A549 (cell line): ENCODE measurements at regions of chr3 and their contacts with region 1.

Region 1: DNA sequence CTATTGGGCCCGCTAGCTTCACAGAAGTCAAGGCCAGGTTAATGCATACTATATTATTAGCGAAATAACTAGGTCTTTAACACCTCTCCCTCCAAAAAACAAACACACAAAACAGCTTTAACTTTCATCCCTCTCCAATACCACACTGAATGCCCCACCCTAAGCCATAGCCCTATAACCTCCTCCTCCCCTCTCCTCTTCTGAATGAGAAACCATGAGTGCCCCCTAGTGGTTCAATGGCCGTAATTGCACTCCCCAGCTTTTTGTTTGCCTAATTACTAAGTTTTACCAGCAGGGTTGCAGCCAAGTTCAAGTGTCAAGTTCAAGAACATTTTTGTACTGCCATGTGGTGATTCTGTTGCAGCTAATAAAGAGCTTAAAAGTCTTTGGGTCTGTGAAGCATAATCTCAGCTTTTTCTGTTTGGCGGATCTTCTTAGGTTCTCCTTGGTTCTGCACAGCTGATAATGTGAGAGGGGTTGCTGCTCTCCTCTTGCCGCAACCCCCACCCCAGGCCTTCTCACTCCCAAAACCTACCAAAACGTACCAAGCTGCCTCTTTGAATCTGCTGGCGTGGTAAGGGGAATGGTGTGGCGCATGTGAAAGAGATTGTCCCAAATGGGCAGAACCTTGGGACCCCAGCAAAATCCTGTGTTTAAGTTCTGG is 57.9 kb downstream of the RPL22L1 start:
- DNase-seq: peak; percentile 67 to 70
- ATAC-seq: peak; percentile 75 to 86
- H3K4me3 ChIP-seq: no peak overlapping the region
- H3K27ac ChIP-seq: no peak overlapping the region
- H3K4me1 ChIP-seq: peaks cover 6% of the 10 kb centered on the region
- CTCF ChIP-seq: peak; percentile 79
- EP300 ChIP-seq: no peak
- POLR2A ChIP-seq: no peak
- RAD21 ChIP-seq: peak; percentile 88 to 90

Region 2: GRCh38 chr3:170414202-170414663 is 397.8 kb before region 1 on chr3:
- CTCF ChIA-PET with region 1: interaction called, 277 read pairs
- POLR2A ChIA-PET with region 1: interaction called, 3 read pairs
- DNase-seq: peak; percentile 49 to 63
- ATAC-seq: peak; percentile 62 to 84; a peak in 5 of 6 replicates
- H3K4me3 ChIP-seq: no peak overlapping the region
- H3K27ac ChIP-seq: no peak overlapping the region
- H3K4me1 ChIP-seq: no peaks in the 10 kb centered on the region
- CTCF ChIP-seq: peak; percentile 96
- EP300 ChIP-seq: no peak
- POLR2A ChIP-seq: no peak
- RAD21 ChIP-seq: peak; percentile 97 to 98

Region 3: GRCh38 chr3:170499565-170500156 is 312.4 kb before region 1 on chr3:
- CTCF ChIA-PET with region 1: interaction called, 16 read pairs
- POLR2A ChIA-PET with region 1: no interaction called
- DNase-seq: peak; percentile 48 to 61
- ATAC-seq: peak; percentile 88 to 95
- H3K4me3 ChIP-seq: no peak overlapping the region
- H3K27ac ChIP-seq: no peak overlapping the region
- H3K4me1 ChIP-seq: no peaks in the 10 kb centered on the region
- CTCF ChIP-seq: peak; percentile 45
- EP300 ChIP-seq: no peak
- POLR2A ChIP-seq: no peak
- RAD21 ChIP-seq: peak; percentile 63 to 70

Region 4: DNA sequence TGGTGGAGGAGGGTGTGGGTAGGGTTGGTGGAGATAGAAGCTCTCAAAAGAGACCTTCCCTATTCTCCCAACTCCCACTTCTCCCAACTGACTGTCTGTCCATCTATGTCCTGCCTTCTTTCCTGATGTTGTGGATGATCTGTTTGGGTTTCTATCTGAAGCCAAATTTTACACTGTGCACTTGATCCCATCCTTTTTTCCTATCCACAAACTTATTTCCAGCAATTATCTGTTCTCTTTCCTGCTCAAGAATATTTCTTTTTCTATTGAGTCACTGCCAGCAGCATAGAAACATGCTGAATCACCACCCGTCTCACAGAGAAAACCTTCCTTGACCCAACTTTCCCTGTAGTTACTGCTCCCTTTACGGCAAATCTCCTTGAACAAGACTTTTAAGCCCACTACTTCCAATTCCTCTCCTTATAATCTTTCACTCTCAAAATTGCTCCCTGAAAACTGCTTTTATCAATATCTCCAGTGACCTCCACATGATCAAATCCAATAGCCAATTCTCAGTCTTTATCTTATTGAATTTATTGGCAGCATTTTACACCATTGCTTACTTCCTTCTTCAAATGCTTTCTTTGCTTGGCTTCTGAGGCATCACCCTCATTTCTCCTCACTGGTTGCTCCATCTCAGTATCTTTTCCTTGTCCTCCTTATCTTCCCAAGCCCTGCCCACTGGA is 84.9 kb before region 1 on chr3:
- CTCF ChIA-PET with region 1: interaction called, 27 read pairs
- POLR2A ChIA-PET with region 1: no interaction called
- DNase-seq: peak; percentile 13 to 42
- ATAC-seq: peak; percentile 78 to 80
- H3K4me3 ChIP-seq: no peak overlapping the region
- H3K27ac ChIP-seq: peak overlapping the region; percentile 69 to 94
- H3K4me1 ChIP-seq: peaks cover 20% of the 10 kb centered on the region
- CTCF ChIP-seq: no peak
- EP300 ChIP-seq: no peak
- POLR2A ChIP-seq: no peak
- RAD21 ChIP-seq: no peak

Region 5: DNA sequence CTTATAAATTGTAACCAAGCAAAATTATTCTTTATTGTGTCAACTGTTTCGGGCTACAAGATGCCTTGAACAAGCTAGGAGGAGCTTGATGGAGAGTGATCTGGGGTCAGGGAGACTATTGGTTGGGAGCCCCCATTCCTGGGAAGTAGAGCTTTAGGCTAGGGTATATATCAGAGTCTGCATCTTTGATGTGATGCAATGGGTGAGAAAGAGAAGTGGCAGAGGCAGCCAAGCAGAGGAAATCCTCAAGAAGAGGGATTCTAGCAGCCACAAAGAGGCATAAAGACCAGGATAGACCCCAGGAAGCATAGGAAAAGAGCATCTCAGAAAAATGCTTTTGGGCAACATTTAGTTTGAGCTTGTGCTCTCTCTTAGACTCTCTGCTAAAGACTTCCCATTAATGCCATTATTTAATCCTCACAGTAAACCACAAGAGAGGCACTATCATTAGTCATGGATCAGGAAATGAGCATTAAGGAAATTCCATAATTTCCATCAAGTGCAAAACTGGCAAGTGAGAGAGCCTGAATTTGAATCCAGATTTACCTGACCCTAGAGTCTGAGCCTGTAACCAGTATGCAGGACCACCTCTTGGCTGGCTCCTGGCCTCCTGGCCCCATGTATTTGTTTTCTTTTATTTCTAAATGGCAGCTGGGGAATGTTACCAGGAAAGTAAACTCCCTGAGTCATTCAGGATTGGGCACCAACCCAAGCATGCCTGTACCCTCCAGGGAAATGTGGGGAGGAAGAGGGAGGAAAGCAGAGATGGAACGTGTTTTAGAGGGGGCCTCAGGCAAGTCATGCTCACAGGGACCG is 60.8 kb before region 1 on chr3:
- CTCF ChIA-PET with region 1: interaction called, 10 read pairs
- POLR2A ChIA-PET with region 1: no interaction called
- DNase-seq: peak; percentile 9 to 45
- ATAC-seq: peak; percentile 81 to 92
- H3K4me3 ChIP-seq: no peak overlapping the region
- H3K27ac ChIP-seq: peak overlapping the region; percentile 65 to 78
- H3K4me1 ChIP-seq: peaks cover 32% of the 10 kb centered on the region
- CTCF ChIP-seq: no peak
- EP300 ChIP-seq: no peak
- POLR2A ChIP-seq: no peak
- RAD21 ChIP-seq: no peak

Region 6: DNA sequence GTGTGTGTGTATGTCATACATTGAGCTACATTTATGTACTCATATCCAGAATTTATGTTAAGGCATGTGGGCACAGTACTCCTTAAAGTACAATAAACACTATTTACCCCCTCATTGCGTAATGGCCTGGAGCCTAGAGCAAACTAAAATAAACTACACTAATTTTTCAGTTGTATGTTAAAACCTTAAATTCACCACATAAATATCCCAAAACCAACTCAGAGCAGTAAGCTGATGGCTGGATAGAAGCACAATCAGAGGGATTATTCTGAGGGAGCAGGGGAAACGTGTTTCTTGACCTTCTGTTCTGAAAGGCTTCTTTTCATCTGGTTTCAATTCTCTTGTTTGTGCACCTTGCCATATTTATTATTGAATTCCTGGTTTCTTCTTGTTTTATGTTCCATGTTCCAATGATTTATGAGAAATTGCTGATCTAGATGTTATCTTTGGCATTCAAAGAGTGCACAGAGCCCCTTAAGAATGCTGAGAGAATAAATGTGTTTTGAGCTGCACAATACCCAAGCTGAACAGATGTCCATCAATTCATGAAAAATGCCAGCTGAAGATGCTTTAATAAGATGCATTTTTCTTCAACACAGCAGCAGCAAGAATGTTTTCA is 28.3 kb after region 1 on chr3:
- CTCF ChIA-PET with region 1: interaction called, 11 read pairs
- POLR2A ChIA-PET with region 1: no interaction called
- DNase-seq: no peak
- ATAC-seq: no peak
- H3K4me3 ChIP-seq: no peak overlapping the region
- H3K27ac ChIP-seq: no peak overlapping the region
- H3K4me1 ChIP-seq: no peaks in the 10 kb centered on the region
- CTCF ChIP-seq: no peak
- EP300 ChIP-seq: no peak
- POLR2A ChIP-seq: no peak
- RAD21 ChIP-seq: no peak